ENCODE measurements at regions of chr2 and their contacts with region 1.

Region 1: GRCh38 chr2:84970868-84971509 is at the start of gene KCMF1:
- DNase-seq: peak; percentile 20 to 77 (median 52)
- H3K4me3 ChIP-seq: peak within 1 kb of the TSS; percentile 62 to 94 (median 86)
- H3K27ac ChIP-seq: peak within 1 kb of the TSS; percentile 62 to 97 (median 92)
- H3K27me3 ChIP-seq: no peaks in the 10 kb centered on the region
- CTCF ChIP-seq: no peak
- total RNA-seq, gene KCMF1: 43.1 to 97.7 (median 72.5) TPM

Region 2: DNA sequence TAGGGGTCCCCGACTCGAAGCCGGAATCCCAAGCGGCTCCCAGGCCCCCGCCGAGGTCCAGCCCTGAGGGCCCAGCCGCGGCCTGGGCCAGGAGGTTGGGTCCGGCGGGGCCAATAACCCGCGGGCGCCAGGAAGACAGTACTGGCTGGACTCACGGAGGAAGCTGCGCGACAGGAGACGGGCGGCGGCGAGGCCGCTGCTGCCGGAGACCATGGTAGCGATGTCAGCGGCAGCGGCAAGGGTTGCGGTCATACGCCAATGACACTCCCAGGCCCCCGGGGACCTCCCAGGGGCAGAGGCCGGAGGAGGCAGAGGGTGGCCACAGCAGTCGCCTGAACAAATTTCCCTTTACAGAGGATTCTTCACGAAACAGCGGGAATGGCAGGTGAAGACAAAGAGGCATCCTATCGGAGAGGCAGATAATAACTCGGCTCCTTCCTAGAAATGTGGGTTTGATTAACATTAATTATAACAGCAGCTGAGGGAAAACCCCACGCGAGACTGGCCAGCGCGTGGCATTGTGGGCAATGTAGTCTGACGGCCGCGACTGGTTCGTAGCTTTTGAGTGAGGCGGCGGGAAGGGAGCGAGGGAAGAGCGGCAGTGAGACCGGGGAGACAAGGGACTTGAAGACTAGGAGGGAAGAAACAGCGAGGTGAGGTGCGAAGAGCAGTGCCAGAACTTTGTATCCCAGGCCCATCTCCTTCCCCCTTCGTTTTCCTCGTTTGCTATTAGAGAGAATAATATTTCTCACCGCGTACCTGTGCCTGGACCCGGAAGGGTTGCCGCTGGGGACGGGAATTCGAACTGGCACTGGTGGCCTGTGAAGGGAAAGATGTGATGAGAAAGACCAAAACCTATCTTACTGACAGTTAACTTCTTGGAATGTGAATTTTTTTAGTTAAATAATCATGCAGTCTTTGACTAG is 511.7 kb before region 1 on chr2 and contains the start of gene SUCLG1:
- intact Hi-C with region 1: loop called in 1 of 2 experiments (anchors 2 kb)
- DNase-seq: peak; percentile 84 to 92 (median 89)
- H3K4me3 ChIP-seq: peak within 1 kb of the TSS; percentile 60 to 100 (median 98)
- H3K27ac ChIP-seq: peak within 1 kb of the TSS; percentile 72 to 99 (median 96)
- H3K27me3 ChIP-seq: no peaks in the 10 kb centered on the region
- CTCF ChIP-seq: peak in 24 of 56 donors; percentile 2 to 59 (median 26)
- total RNA-seq, gene SUCLG1: 44.4 to 93.6 (median 71.6) TPM

Region 3: DNA sequence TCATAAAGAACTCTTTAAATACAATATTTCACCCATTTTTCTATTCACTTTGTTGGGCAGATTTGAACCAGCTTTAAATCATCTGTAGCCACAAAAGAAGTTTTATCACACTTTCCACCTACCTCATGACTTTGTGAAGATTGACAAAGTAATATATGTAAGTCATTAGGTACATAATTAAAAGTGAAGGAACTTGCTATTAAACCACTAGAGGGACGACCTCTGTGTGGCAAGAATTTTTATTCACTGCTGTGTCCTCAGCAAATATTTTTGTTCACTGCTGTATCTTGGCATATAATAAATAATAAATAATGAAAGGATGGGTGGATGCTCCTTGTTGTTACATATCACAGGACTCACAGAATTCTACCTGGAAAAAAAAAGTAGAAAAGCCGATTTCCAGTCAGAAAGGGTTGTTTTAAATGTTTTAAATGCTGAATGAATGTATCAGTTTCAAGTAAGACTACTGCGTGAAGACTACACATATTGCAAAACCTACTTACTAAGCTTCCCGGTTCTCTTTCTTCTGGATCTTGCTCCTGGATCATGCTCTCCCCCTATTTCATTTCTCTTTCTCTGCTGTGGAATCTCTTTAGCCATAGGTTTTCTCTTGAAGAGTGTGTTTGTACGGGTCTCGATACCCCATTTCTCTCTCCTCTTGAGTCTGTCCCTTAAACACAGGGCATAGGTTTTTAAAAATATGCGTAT is 44.8 kb after region 1 on chr2:
- intact Hi-C with region 1: loop called in 1 of 2 experiments (anchors 2 kb)
- DNase-seq: no peak
- H3K4me3 ChIP-seq: no peak overlapping the region
- H3K27ac ChIP-seq: peak overlapping the region in 4 of 59 donors; percentile 10 to 48 (median 24)
- H3K27me3 ChIP-seq: no peaks in the 10 kb centered on the region
- CTCF ChIP-seq: peak in 6 of 56 donors; percentile 8 to 33 (median 12)

Measured in dorsolateral prefrontal cortex (tissue), 120 donors.